ENCODE measurements at regions of chr3 and their contacts with region 1.

Region 1: DNA sequence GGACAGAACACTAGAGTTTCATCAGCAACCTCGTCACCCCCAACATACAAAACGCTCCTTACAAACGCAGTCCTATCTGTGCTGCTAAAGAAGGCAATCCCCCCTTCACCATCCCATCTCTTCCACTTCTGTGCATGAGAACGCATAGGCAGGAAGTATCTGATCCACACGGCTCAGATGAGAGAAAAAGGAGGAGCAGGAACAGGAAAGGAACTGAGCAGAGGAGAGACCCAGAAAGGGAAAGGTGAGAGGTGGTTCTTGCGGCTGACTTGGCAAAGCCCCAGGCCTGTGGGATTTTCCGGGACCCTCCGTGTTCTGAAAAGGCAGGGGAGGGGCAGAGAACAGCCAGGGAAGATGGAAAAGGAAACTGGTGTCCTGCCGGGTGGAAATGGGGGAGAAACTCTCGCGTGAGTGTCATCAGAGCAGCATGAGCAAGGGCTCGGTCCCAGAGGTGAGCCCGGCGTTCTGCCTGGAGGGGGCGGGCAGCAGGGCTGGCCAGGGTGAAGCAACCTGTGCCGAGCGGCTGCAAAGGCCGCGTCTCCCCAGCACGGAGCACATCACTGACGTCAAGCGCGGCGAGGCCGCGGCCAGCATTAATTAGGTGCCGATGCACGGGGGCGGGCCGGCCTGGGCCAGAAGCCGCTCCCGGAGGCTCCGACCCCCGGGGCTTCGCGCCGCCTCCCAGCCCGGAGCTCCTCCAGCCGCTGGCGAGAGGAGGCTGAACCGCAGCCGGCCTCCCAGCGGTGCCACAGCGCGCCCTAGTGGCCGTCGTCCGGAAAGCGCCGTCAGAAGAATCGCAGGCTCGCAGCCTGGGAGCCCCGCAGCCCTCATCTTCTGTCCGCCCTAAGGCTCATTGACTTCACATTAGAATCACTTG is 35.8 kb downstream of the CPN2 start:
- DNase-seq: peak; percentile 66
- H3K4me3 ChIP-seq: no peak overlapping the region
- H3K27ac ChIP-seq: no peak overlapping the region
- H3K4me1 ChIP-seq: no peaks in the 10 kb centered on the region
- CTCF ChIP-seq: peak; percentile 89

Region 2: DNA sequence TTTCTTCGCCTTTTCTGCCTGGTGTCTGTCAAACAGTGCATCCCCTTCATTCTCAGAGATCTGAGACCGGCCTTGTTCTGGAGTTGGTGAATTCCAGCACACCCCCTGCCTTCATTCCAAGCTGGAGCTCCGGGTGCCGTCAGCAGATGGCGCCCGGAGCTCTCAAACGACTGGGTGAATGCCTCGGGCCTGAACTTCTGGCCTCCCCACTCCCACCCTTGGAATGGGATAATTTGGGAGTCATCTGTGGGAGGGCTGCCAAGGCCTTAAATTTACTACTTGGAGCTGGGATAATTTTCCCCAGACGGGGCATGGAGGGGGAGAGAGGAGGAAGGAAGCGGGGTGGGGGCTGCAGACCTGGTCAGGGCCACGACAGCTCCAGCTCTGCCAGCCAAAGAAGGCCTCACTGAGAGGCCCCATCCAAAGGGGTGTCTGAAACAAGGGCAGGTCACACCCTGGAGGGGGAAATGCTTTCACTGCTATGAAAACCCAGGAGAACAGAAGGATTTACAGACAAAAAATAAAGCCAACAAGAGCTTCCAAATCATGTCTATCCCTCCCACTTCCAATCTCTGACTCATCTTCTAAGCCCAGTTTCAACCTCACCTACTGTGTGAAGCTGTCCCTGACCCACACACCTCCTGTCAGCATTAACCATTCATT is 534.4 kb before region 1 on chr3:
- CTCF ChIA-PET with region 1: no interaction called
- POLR2A ChIA-PET with region 1: no interaction called
- intact Hi-C with region 1: loop called (anchors 1 kb)
- DNase-seq: peak; percentile 64
- H3K4me3 ChIP-seq: no peak overlapping the region
- H3K27ac ChIP-seq: no peak overlapping the region
- H3K4me1 ChIP-seq: peaks cover 20% of the 10 kb centered on the region
- CTCF ChIP-seq: peak; percentile 90

Measured in OCI-LY7 (cell line).